Activated B cell treated with CpG ODN at 0.5 μM for 24 hours (primary cell): ENCODE measurements at regions of chrX and their contacts with region 1.

Region 1: GRCh38 chrX:49002091-49002935 is at the start of gene GRIPAP1:
- DNase-seq: peak; percentile 52
- ATAC-seq: peak; percentile 88
- H3K4me3 Mint-ChIP-seq: peak within 1 kb of the TSS; percentile 99
- H3K27ac Mint-ChIP-seq: peak within 1 kb of the TSS; percentile 97
- H3K4me1 Mint-ChIP-seq: peaks cover 24% of the 10 kb centered on the region
- H3K27me3 Mint-ChIP-seq: no peaks in the 10 kb centered on the region
- CTCF ChIP-seq: no peak
- total RNA-seq, gene GRIPAP1: 97.3 and 117 TPM in 2 replicates

Region 2: GRCh38 chrX:49053223-49054072 is 51.1 kb after region 1 on chrX:
- CTCF ChIA-PET with region 1: no interaction called
- POLR2A ChIA-PET with region 1: interaction called, 12 read pairs
- intact Hi-C with region 1: no loop called
- DNase-seq: peak; percentile 35
- ATAC-seq: peak; percentile 79
- H3K4me3 Mint-ChIP-seq: peak overlapping the region; percentile 81
- H3K27ac Mint-ChIP-seq: peak overlapping the region; percentile 85
- H3K4me1 Mint-ChIP-seq: peaks cover 25% of the 10 kb centered on the region
- H3K27me3 Mint-ChIP-seq: no peaks in the 10 kb centered on the region
- CTCF ChIP-seq: no peak

Region 3: GRCh38 chrX:49172280-49172780 is 170.0 kb after region 1 on chrX:
- CTCF ChIA-PET with region 1: no interaction called
- POLR2A ChIA-PET with region 1: interaction called, 6 read pairs
- intact Hi-C with region 1: loop called (anchors 5 kb)
- DNase-seq: peak; percentile 57
- ATAC-seq: peak; percentile 67
- H3K4me3 Mint-ChIP-seq: peak overlapping the region; percentile 89
- H3K27ac Mint-ChIP-seq: peak overlapping the region; percentile 84
- H3K4me1 Mint-ChIP-seq: peaks cover 37% of the 10 kb centered on the region
- H3K27me3 Mint-ChIP-seq: no peaks in the 10 kb centered on the region
- CTCF ChIP-seq: no peak